Posterior cingulate gyrus (tissue), 11 donors: ENCODE measurements at regions of chr3 and their contacts with region 1.

Region 1: GRCh38 chr3:62188681-62189383 is 184.5 kb downstream of the FEZF2 start:
- DNase-seq: peak; percentile 48 to 93 (median 74)

Region 2: GRCh38 chr3:61561374-61562041 is 627.3 kb before region 1 on chr3 and contains the start of gene PTPRG:
- intact Hi-C with region 1: loop called (anchors 2 kb)
- DNase-seq: peak; percentile 50 to 96 (median 75)

Region 3: DNA sequence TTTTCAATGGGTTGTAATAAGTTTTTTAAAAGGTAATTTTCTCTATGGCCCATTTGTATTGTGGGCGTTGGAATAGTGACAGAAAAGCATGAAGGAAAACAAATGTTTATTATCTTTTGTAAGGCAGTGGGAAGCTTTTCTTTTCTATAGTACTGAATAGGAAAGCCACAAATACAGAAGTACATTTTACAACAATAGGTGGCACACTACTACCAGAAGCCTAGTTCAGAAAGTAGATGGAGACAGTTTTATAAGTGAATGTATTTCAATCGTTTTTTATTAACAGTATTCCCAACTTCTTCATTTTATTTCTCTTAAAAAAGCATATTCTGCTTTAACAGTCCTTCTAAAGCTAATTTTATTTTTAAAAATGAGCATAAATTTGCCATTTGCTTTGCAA is 330.8 kb before region 1 on chr3:
- intact Hi-C with region 1: loop called (anchors 5 kb)
- DNase-seq: no peak